ENCODE measurements at regions of chr19 and their contacts with region 1.

Region 1: GRCh38 chr19:3429581-3430080 is 50.7 kb downstream of the SMIM24 start:
- DNase-seq: no peak
- H3K4me3 ChIP-seq: no peak overlapping the region
- CTCF ChIP-seq: peak; percentile 91

Region 2: GRCh38 chr19:3336680-3337523 is 92.7 kb before region 1 on chr19:
- CTCF ChIA-PET with region 1: interaction called, 17 read pairs
- POLR2A ChIA-PET with region 1: no interaction called
- DNase-seq: no peak
- H3K4me3 ChIP-seq: no peak overlapping the region
- CTCF ChIP-seq: no peak

Region 3: GRCh38 chr19:3353493-3353892 is 76.1 kb before region 1 on chr19:
- CTCF ChIA-PET with region 1: interaction called, 11 read pairs
- POLR2A ChIA-PET with region 1: no interaction called
- DNase-seq: no peak
- H3K4me3 ChIP-seq: no peak overlapping the region
- CTCF ChIP-seq: no peak

Region 4: DNA sequence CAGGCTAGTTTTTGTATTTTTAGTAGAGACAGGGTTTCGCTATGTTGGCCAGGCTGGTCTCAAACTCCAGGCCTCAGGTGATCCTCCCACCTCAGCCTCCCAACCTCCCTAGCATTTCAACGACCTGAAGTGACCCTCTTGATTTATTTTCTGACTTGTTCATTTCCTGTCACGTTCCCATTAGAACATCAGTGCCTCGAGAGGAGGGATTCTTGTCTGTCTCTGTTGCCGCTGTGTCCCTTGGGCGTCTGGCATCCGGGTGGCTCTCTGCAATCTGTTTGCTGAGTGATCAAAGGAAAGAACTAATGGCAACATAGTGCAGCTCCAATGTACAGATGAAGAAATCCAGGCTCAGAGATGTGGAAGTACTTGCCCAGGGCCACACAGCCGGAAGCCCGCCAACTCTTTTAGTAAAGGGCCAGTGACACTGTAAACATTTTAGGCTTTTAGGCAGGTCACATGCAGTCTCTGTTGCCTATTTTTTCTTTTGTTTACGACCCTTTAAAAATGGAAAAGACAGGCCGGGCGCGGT is 15.8 kb before region 1 on chr19:
- CTCF ChIA-PET with region 1: interaction called, 81 read pairs
- POLR2A ChIA-PET with region 1: no interaction called
- DNase-seq: no peak
- H3K4me3 ChIP-seq: no peak overlapping the region
- CTCF ChIP-seq: no peak

Region 5: DNA sequence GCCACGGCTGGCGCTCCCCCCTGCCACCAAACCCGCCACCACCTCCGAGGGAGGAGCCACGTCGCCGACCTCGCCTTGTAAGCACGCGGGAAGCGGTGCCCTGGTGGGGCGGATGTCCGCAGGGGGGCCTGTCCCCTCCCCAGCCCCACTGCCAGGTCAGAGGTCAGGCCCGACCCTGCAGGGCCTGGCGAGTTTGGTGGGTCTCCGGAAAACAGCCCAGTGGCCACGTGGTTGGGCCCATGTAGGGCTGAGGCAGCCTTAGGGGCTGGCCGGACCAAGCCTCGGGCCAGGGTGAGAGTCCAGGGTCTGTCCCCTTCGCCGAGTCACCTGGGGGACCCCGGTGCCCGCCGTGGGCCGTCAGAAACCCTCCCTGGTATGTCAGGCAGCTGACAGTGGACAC is 24.2 kb after region 1 on chr19:
- CTCF ChIA-PET with region 1: no interaction called
- POLR2A ChIA-PET with region 1: no interaction called
- DNase-seq: no peak
- H3K4me3 ChIP-seq: no peak overlapping the region
- CTCF ChIP-seq: no peak

Region 6: DNA sequence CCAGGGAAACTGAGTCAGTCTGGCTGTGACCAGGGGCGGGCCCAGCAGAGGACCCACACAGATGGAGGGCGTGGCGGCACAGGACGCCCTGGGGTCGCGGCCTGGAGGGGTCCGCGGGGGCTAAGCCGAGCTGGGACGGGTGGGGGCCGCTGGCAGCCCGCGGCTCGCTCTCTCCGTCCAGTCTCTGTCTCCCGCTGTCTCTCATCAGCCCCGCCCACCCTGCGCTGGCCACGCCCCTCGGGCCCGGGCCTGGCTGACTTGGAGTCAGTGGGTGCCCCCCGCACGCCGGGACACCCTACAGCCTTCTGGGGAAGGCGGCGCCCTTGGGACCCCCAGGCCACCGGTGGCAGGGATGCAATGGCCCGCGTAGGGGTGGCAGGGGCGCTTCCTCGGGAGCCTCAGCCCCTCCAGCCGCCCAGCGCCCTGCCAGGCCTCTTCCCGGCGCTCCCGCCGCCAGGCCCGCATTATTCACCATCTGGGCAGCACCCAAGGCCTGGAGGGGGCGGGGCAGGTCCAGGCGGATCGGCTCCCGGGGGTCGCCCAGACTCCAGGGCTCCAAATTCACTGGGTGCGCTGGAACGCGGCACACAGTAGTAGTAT is 177.2 kb after region 1 on chr19 and contains the start of gene TBXA2R:
- CTCF ChIA-PET with region 1: no interaction called
- POLR2A ChIA-PET with region 1: no interaction called
- DNase-seq: no peak
- H3K4me3 ChIP-seq: peak within 1 kb of the TSS; percentile 72
- CTCF ChIP-seq: no peak

Region 7: GRCh38 chr19:4988770-4989251 is 1559.2 kb after region 1 on chr19:
- CTCF ChIA-PET with region 1: no interaction called
- POLR2A ChIA-PET with region 1: no interaction called
- DNase-seq: no peak
- H3K4me3 ChIP-seq: no peak overlapping the region
- CTCF ChIP-seq: no peak

Measured in AG04449 (cell line).